Prostate gland (tissue), 2 donors: ENCODE measurements at regions of chr1 and their contacts with region 1.

Region 1: DNA sequence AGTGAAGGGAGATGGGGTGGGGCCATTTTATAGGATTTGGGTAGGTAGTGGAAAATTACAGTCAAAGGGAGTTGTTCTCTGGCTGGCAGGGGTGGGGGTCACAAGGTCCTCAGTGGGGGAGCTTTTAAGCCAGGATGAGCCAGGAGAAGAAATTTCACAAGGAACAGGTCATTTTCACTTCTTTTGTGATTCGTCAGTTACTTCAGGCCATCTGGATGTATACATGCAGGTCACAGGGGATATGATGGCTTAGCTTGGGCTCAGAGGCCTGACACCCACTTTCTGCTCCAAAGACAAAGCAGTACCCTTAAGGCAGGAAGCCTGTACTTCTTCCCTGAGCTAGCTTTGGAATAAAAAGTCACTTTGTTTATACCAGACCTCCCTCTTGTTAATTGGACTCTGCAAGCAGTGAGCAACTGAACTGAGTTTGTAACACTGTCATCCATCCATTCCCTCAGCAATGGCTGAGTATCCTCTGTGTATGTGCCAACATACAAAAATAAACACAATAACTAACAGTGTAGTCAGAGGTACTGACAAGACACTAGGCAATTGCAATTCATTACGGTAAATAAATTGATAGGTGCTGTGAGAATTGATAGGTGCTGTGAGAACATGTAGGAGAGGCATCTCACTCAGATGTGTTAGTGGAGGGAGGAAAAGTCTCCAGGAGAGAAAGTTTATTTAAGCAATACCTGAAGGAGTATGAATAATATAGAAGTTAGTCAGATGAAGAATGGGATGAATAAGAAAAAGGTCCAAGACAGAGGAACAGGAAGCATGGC is 14.7 kb upstream of the RGS2 start:
- DNase-seq: no peak
- H3K4me3 ChIP-seq: no peak overlapping the region
- H3K27ac ChIP-seq: no peak overlapping the region
- H3K4me1 ChIP-seq: no peaks in the 10 kb centered on the region
- H3K27me3 ChIP-seq: no peaks in the 10 kb centered on the region
- CTCF ChIP-seq: no peak
- POLR2A ChIP-seq: no peak

Region 2: GRCh38 chr1:192190066-192190465 is 604.1 kb before region 1 on chr1:
- intact Hi-C with region 1: no loop called
- DNase-seq: no peak
- H3K4me3 ChIP-seq: no peak overlapping the region
- H3K27ac ChIP-seq: no peak overlapping the region
- H3K4me1 ChIP-seq: no peaks in the 10 kb centered on the region
- H3K27me3 ChIP-seq: no peaks in the 10 kb centered on the region
- CTCF ChIP-seq: no peak
- POLR2A ChIP-seq: no peak

Region 3: GRCh38 chr1:192639607-192640368 is 154.4 kb before region 1 on chr1:
- intact Hi-C with region 1: loop called (anchors 10 kb)
- DNase-seq: no peak
- H3K4me3 ChIP-seq: no peak overlapping the region
- H3K27ac ChIP-seq: no peak overlapping the region
- H3K4me1 ChIP-seq: no peaks in the 10 kb centered on the region
- H3K27me3 ChIP-seq: no peaks in the 10 kb centered on the region
- CTCF ChIP-seq: no peak
- POLR2A ChIP-seq: no peak